Heart right ventricle (tissue), 16 donors: ENCODE measurements at regions of chr2 and their contacts with region 1.

Region 1: DNA sequence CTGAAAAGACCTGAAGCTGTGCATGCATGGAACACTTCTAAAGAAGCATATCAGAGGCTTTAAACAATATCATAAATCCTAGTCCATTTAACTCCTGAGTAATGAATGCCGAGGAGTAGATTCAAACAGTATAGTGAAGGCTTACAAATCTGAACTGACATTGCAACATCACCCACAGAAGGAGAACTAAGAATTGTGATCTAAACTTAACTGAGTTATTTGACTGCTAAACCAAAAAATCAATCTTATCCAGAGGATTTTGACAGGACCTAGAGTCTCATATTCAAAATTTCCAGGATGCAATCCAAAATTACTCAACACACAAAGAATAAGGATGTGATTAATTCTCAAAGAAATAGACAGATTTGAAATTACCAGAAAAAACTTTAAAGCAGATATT is 181.0 kb downstream of the SLC39A10 start:
- DNase-seq: no peak
- ATAC-seq: no peak
- H3K4me3 ChIP-seq: no peak overlapping the region
- H3K27ac ChIP-seq: no peak overlapping the region
- H3K4me1 ChIP-seq: no peaks in the 10 kb centered on the region
- H3K27me3 ChIP-seq: no peaks in the 10 kb centered on the region
- CTCF ChIP-seq: no peak

Region 2: GRCh38 chr2:195820373-195820772 is 17.6 kb before region 1 on chr2:
- intact Hi-C with region 1: loop called in 1 of 10 experiments (anchors 1 kb)
- DNase-seq: no peak
- ATAC-seq: no peak
- H3K4me3 ChIP-seq: no peak overlapping the region
- H3K27ac ChIP-seq: no peak overlapping the region
- H3K4me1 ChIP-seq: no peaks in the 10 kb centered on the region
- H3K27me3 ChIP-seq: no peaks in the 10 kb centered on the region
- CTCF ChIP-seq: no peak

Region 3: GRCh38 chr2:196337208-196337953 is 499.4 kb after region 1 on chr2:
- intact Hi-C with region 1: no loop called
- DNase-seq: no peak
- ATAC-seq: no peak
- H3K4me3 ChIP-seq: no peak overlapping the region
- H3K27ac ChIP-seq: peak overlapping the region in 1 of 10 donors; percentile 8
- H3K4me1 ChIP-seq: peaks cover 0 to 84% (median 22%) of the 10 kb centered on the region in 9 donors
- H3K27me3 ChIP-seq: no peaks in the 10 kb centered on the region
- CTCF ChIP-seq: peak; percentile 10 to 64 (median 56)